CD8-positive, alpha-beta memory T cell (primary cell): ENCODE measurements at regions of chr4 and their contacts with region 1.

Region 1: GRCh38 chr4:139656614-139657486 is 8.8 kb upstream of the MGST2 start:
- DNase-seq: peak; percentile 11 to 63 (median 37)
- H3K4me3 ChIP-seq: no peak overlapping the region
- H3K4me3 Mint-ChIP-seq: peak overlapping the region in 3 of 7 donors; percentile 11 to 63 (median 42)
- H3K27ac ChIP-seq: no peak overlapping the region
- H3K27ac Mint-ChIP-seq: peak overlapping the region in 3 of 8 donors; percentile 5 to 85 (median 35)
- H3K4me1 ChIP-seq: peaks cover 11% of the 10 kb centered on the region
- H3K4me1 Mint-ChIP-seq: peaks cover 18 to 21% (median 18%) of the 10 kb centered on the region in 3 donors
- H3K27me3 ChIP-seq: no peaks in the 10 kb centered on the region
- H3K27me3 Mint-ChIP-seq: peaks cover 1 to 9% of the 10 kb centered on the region in 2 donors

Region 2: DNA sequence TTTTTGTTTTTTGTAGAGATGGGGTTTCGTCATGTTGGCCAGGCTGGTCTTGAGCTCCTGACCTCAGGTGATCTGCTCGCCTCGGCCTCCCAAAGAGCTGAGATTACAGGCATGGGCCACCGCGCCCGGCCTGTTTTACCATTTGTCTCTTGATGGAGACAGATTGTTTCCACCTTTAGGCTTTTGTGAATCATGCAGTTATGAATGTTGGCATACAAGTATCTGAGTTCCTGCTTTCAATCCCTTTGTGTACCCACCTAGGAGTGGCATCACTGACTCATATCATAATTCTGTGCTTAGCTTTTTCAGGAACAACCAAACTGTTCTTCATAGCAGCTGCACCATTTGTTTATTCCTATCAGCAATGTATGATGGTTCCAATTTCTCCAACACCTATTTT is 11.4 kb before region 1 on chr4:
- CTCF ChIA-PET with region 1: interaction called, 18 read pairs
- POLR2A ChIA-PET with region 1: no interaction called
- DNase-seq: no peak
- H3K4me3 ChIP-seq: no peak overlapping the region
- H3K4me3 Mint-ChIP-seq: no peak overlapping the region
- H3K27ac ChIP-seq: no peak overlapping the region
- H3K27ac Mint-ChIP-seq: no peak overlapping the region
- H3K4me1 ChIP-seq: no peaks in the 10 kb centered on the region
- H3K4me1 Mint-ChIP-seq: no peaks in the 10 kb centered on the region
- H3K27me3 ChIP-seq: no peaks in the 10 kb centered on the region
- H3K27me3 Mint-ChIP-seq: peaks cover 0 to 2% of the 10 kb centered on the region in 2 donors